ENCODE measurements at regions of chr16 and their contacts with region 1.

Region 1: DNA sequence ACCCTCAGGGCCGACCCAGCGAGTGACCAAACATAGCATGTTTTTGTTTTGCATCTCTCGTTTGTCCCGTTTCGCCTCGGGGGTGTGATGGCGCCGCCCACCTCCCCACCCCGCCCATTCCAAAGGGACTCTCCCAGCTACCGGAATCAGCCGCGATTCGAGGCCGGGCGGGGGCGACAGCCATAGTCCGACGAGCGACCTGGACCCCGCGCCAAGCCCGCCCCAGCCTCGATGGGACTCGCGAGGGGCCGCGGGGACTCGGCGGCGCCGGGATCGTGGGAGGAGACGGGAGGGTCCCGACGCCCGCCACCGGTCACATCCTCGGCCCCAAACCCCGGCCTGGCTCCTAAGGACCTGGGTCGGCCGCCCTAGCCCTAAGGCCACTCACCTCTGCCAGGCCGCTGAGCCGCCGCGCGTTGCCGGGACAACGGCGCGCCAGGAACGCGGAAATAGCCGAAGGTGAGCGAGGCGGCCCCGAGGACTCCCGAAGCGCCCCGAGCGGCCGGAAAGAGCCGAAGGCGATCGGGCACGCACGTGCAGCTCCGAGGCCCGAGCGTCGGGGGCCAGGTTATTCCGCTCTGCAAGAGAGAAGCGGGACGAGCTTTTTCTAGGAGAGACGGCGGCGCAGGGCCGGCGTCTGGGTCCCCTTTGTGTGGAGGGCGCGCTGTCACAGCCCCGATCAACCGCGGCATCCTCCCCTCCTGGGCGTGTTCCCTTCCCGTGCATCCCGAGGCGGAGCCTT is 1.4 kb downstream of the IFT140 start:
- DNase-seq: peak; percentile 63 to 96 (median 77)

Region 2: DNA sequence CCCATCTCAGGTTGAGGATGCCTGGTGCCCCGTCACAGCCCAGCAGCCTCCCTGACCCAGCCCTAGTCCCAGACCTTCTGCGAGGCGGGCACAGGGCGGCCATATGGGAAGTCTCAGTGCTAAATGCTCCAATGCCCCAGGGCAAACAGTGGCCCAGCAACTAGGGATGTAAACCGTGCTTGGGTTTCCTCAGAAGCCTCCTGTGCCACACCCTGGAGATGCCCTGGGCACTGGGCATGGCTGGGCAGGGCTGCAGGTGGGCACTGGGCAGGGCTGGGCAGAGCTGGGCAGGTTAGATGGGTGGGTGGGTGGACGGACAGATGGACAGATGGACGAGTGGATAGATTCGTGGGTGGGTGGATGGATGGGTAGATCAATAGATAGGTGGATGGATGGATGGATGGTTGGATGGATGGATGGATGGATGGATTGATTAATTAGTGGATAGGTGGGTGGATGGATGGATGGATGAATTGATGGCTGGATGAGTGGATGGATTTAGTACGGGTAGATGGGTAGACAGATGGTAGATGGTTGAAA is 337.8 kb before region 1 on chr16:
- intact Hi-C with region 1: no loop called
- DNase-seq: no peak

Region 3: DNA sequence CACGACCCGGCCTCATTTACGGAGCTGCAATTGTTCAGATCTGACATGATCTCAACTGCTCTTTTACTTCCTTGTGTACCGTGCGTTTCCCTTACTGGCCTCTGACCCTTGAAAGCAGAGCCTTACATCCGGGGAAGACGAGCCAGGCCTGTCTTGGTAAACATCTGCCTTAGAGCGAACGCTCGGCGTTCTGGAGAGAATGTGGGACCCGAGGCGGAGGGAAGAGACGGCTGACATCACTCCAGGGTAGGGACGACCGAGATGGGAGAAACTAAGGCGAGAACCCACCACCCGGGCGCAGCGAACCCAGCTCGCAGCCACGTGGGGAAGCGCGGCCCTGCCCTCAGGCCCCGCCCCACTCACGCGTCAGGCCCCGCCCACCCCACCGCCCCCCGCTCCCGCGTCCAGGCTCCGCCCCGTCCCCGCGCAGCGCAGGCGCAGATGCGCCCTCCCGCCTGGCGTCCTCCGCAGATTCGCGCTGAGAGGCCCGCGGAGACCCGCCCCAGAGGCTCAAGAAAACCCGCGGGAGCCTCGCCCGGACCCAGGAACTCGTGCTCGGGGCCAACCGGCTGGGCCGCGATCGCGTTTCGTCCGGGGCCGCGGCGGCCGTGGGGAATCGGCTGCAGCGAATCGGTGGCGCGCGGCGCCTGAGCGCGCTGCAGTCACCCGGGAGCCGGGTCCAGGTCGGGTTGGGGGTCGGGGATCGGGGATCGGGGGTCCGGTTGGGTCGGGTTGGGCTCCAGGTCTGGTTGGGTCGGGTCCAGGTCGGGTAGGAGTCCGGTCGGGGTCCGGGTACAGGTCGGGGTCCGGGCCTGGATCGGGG is 117.3 kb before region 1 on chr16 and contains the start of gene TELO2:
- intact Hi-C with region 1: loop called (anchors 10 kb)
- DNase-seq: peak; percentile 69 to 97 (median 77)

Region 4: GRCh38 chr16:1564325-1564724 is 46.1 kb before region 1 on chr16:
- intact Hi-C with region 1: no loop called
- DNase-seq: no peak

Region 5: DNA sequence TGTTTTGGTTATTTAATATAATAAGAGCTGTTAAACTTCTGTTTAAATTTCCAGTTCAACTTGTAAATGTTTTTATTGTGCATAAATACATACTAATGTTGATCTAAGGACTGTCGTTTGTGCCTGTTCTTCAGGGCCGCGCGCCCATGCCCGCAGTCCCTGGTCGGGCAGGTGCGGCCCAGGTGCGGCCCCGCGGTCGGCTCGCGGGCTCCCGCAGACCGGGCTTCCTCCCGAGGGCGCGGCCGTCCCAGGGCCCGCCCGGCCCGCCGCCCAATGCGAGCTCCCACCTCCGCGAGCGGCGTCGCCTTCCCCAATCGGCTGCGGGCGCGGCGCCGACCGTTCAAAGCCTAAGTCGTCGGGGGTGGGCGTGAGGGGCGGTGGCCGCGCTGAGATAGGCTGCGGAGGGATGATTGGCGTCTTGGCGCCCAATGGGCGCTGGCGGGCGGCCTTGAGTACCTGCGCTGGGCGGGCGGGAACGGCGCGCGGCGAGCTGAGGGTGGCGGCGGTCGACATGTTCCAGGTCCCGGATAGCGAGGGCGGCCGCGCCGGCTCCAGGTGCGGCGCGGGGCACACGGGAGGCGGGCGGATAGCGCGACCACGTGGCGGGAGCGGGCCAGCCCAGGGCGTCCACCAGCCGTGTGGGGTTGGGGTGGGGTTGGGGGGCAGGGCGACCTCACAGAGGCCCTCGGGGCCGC is 67.5 kb after region 1 on chr16 and contains the start of gene JPT2:
- intact Hi-C with region 1: loop called (anchors 10 kb)
- DNase-seq: peak; percentile 85 to 99 (median 94)

Region 6: DNA sequence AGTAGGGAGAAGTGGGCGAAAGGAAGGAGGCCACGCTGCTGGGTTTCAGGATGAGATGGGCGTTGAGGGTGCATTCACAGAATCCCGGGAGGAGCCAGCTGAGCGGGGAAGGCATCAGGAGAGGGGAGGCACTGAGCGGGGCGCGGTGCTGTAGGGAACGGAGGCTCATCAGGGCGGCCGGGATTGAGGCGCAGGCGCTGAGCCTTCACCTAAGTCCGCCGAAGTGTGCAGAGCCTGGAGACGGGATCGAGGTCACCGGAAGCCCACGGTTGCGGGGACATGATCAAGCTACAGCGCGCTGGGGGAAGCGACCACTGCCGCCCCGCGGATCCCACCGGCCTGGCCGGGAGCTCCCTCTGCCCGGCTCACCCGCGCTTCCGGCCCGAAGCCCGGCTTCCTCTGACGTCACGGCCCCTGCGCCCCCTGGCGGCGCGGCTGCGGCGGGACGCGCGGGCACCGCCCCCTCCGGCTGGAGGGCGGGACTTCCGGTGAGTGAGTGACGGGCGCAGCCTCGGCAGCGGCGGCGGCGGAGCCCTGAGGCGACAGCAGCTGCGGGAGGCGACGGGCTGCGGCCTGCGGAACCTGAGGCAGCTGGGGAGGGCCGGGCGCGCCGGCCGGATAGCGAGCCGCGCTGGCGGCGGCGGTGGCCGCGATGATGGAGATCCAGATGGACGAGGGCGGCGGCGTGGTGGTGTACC is 95.4 kb after region 1 on chr16 and contains the start of gene MAPK8IP3:
- intact Hi-C with region 1: loop called (anchors 5 kb)
- DNase-seq: peak; percentile 86 to 99 (median 90)